ENCODE measurements at regions of chrX and their contacts with region 1.

Region 1: GRCh38 chrX:10755439-10756334 is 135.3 kb upstream of the MID1 start:
- DNase-seq: peak; percentile 63
- H3K4me3 ChIP-seq: no peak overlapping the region
- H3K27ac ChIP-seq: peak overlapping the region; percentile 87
- H3K27me3 ChIP-seq: no peaks in the 10 kb centered on the region
- CTCF ChIP-seq: no peak

Region 2: GRCh38 chrX:10769195-10769594 is 13.5 kb after region 1 on chrX:
- CTCF ChIA-PET with region 1: interaction called, 16 read pairs
- POLR2A ChIA-PET with region 1: interaction called, 4 read pairs
- DNase-seq: no peak
- H3K4me3 ChIP-seq: peak overlapping the region; percentile 41; the same call in 1 of the 2 replicates
- H3K27ac ChIP-seq: peak overlapping the region; percentile 52
- H3K27me3 ChIP-seq: no peaks in the 10 kb centered on the region
- CTCF ChIP-seq: peak; percentile 54

Region 3: DNA sequence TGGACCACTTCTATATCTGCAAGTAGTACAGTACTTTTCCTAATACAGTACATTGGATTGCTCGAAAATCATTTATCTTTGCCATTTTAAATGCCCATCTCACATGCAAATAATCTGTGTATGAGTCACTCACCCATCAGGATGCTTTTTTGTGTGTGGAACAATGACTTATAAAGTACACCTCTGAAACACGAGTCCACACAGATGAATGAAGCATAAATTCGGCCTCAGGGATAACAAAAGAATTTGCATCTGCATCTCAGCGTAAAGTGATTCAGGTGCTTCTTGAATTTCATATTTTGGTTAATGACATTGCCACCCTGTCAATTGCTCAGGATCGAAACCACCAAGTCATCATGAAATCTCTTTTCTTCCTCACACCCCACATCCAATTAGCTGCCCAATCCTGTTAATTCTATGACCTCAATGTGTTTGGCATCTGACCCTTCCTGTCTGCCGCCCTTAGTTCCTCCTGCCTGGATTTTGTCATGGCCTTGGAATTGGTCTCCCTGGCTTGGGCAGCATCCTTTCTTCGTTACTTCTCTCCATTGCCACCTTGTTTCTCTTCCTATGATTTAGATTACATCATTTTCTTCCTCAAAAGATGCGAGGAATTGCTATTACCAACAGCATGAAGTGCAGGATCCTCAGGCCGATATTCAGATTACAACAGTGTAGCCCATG is 26.3 kb after region 1 on chrX:
- CTCF ChIA-PET with region 1: no interaction called
- POLR2A ChIA-PET with region 1: no interaction called
- DNase-seq: no peak
- H3K4me3 ChIP-seq: no peak overlapping the region
- H3K27ac ChIP-seq: no peak overlapping the region
- H3K27me3 ChIP-seq: no peaks in the 10 kb centered on the region
- CTCF ChIP-seq: no peak

Measured in AG04450 (cell line).